PC-9 (cell line): ENCODE measurements at regions of chr3 and their contacts with region 1.

Region 1: DNA sequence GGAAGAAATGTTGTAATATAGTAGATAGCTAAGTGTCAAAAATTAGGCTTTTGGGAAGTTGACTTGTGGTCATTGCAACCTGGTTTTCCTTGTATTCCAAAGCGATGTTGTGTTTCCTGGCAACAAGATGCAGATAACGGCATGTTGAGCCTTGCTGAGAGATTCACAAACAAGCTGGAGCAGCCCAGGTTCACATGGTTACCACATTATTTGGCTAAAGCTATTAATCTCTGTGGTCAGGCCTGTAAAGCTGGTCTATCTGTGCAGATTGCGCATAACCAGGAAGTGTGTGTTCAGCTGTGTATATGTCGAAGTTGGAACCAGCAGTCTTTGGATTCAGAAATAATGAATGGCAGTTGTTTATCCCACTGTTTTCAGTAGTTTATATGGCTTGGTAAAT is 6.6 kb downstream of the TIPARP start:
- DNase-seq: peak; percentile 62 to 99
- H3K4me3 ChIP-seq: no peak overlapping the region
- H3K27ac ChIP-seq: no peak overlapping the region
- H3K4me1 ChIP-seq: peaks cover 99% of the 10 kb centered on the region
- H3K27me3 ChIP-seq: no peaks in the 10 kb centered on the region
- CTCF ChIP-seq: no peak

Region 2: DNA sequence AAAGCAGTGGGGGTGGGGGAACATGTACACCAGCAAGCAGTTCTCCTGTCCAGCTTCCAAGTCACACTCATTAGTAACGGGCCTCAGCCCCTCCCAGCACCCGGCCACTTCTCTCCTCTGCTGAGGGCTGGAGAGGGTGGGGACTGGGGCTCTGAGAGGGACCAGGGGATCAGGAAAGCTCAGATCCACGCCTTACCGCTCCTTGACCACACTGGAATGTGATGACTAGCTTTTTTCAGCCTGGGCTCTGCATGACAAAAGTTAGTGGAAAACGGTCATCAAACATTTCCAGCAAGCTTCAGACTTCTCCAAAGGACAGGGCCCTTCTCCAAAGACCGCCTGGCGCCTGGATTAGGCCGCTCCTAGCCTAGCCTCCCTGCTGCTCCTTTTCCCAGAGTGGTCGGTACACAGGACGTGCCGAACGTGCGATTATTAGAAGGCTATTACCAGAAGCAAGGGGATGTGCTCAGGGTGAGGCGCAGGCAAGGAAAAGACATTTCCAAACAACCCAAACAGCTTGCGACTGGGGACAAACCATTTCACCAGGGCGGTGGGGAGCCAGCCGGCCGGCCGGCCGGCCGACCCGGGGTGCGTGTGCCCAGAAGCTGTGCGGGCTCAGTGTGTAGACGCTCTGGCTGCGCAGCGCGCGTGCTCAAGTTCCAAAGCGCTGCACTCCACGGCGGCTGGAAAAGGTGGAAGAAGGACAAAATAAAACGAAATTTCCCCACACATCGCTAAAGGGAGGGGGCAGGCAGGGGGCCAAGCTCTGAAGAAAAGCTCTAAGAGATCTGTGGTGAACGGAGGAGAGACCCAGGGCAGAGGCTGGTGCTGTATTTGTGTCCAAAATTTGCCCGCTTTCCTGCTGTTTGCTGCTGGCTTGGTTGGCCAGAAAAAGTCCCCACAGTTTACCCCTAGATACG is 75.1 kb before region 1 on chr3:
- CTCF ChIA-PET with region 1: no interaction called
- POLR2A ChIA-PET with region 1: interaction called, 22 read pairs
- intact Hi-C with region 1: no loop called
- DNase-seq: peak; percentile 75 to 82
- H3K4me3 ChIP-seq: peak overlapping the region; percentile 56
- H3K27ac ChIP-seq: peak overlapping the region; percentile 49
- H3K4me1 ChIP-seq: peaks cover 44% of the 10 kb centered on the region
- H3K27me3 ChIP-seq: no peaks in the 10 kb centered on the region
- CTCF ChIP-seq: no peak

Region 3: GRCh38 chr3:157154563-157155330 is 473.7 kb after region 1 on chr3:
- CTCF ChIA-PET with region 1: no interaction called
- POLR2A ChIA-PET with region 1: interaction called, 10 read pairs
- intact Hi-C with region 1: no loop called
- DNase-seq: no peak
- H3K4me3 ChIP-seq: peak overlapping the region; percentile 93; the same call in 1 of the 2 replicates
- H3K27ac ChIP-seq: peak overlapping the region; percentile 5; the same call in 1 of the 2 replicates
- H3K4me1 ChIP-seq: peaks cover 45% of the 10 kb centered on the region
- H3K27me3 ChIP-seq: no peaks in the 10 kb centered on the region
- CTCF ChIP-seq: no peak

Region 4: DNA sequence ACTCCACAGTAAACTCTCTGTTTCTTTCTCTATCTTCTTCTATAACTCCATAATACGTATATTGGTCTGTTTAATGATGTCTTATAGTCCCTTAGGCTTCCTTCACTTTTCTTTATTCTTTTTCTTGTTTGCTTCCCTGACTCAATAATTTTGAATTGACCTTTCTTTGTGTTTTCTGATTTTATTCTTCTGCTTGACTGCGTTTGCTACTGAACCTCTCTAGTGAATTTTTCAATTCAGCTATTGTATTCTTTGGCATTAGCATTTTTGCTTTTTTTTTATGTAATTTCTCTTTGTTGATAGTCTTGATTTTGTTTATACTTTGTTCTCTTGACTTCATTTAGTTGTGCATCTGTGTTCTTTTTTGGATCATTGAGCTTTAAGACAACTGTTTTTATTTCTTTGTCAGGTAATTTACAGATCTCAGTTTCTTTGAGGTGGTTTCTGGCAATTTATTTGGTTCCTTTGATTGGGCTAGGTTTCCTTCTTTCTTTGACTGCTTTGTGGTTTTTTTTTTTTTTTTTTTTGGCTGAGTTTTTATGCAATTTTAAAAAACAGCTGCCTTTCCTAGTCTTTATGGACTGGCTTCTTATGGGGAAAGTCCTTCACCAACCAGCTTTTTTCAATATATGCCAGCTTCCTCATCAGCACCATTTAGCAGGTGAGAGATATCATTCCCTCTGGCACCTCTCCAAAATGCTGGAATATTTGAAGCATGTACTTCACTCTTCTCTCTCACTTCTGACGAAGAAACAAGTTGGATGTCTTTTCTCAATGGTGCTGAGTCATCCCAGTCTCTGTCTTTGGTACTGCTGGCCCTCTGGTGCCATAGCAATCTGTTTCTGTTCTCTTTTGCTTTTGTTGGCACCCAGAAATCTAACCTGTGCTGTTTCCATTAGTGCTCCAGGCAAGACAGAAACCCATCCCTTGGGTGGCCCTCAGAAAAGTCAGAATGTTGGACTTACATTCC is 1446.5 kb after region 1 on chr3:
- CTCF ChIA-PET with region 1: no interaction called
- POLR2A ChIA-PET with region 1: no interaction called
- intact Hi-C with region 1: no loop called
- DNase-seq: peak; percentile 45 to 62
- H3K4me3 ChIP-seq: no peak overlapping the region
- H3K27ac ChIP-seq: peak overlapping the region; percentile 18; the same call in 1 of the 2 replicates
- H3K4me1 ChIP-seq: 0 out of 2 replicates have a peak, but pooled peaks cover 11% of the 10 kb centered on the region
- H3K27me3 ChIP-seq: no peaks in the 10 kb centered on the region
- CTCF ChIP-seq: no peak